ENCODE measurements at regions of chr3 and their contacts with region 1.

Region 1: GRCh38 chr3:128736601-128737000 is 10.6 kb downstream of the RAB7A start:
- DNase-seq: no peak
- CTCF ChIP-seq: no peak

Region 2: GRCh38 chr3:128725932-128726690 is 10.5 kb before region 1 on chr3 and contains the start of gene RAB7A:
- CTCF ChIA-PET with region 1: interaction called, 8 read pairs
- POLR2A ChIA-PET with region 1: interaction called, 15 read pairs
- DNase-seq: peak; percentile 96
- CTCF ChIP-seq: no peak

Region 3: GRCh38 chr3:128767094-128767750 is 30.6 kb after region 1 on chr3:
- CTCF ChIA-PET with region 1: interaction called, 11 read pairs
- POLR2A ChIA-PET with region 1: no interaction called
- DNase-seq: no peak
- CTCF ChIP-seq: no peak

Region 4: GRCh38 chr3:129005526-129006303 is 269.1 kb after region 1 on chr3:
- CTCF ChIA-PET with region 1: no interaction called
- POLR2A ChIA-PET with region 1: no interaction called
- DNase-seq: no peak
- CTCF ChIP-seq: no peak